ENCODE measurements at regions of chr9 and their contacts with region 1.

Region 1: GRCh38 chr9:128552153-128552743 is at the start of gene SPTAN1:
- DNase-seq: peak; percentile 99
- CTCF ChIP-seq: no peak

Region 2: DNA sequence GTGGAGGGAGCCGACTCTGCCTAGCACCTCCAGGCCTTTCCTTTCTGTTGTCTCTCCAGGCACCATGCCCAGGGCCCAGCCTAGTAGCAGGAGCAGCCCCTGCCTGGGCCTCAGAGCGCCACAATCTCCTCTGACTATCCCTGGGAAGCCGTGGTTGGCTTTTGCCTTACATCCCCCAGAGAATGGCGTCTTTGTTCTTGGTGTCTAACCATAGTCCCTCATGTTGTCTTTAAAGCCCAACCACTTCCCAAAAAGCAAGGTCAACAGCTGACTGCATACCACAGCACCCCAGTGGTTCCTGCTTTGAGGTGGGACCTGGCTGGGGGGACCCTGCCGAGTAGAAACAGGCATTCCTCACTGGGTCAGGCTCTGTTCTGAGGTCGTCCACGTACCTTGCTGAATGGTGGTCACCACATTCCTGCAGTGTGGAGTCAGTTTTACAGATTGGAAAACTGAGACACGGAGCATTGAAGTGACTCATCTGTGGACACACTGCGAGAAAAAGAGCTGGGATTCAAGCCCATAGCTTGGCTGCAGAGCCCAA is 145.3 kb before region 1 on chr9:
- CTCF ChIA-PET with region 1: no interaction called
- POLR2A ChIA-PET with region 1: no interaction called
- DNase-seq: no peak
- CTCF ChIP-seq: no peak

Region 3: DNA sequence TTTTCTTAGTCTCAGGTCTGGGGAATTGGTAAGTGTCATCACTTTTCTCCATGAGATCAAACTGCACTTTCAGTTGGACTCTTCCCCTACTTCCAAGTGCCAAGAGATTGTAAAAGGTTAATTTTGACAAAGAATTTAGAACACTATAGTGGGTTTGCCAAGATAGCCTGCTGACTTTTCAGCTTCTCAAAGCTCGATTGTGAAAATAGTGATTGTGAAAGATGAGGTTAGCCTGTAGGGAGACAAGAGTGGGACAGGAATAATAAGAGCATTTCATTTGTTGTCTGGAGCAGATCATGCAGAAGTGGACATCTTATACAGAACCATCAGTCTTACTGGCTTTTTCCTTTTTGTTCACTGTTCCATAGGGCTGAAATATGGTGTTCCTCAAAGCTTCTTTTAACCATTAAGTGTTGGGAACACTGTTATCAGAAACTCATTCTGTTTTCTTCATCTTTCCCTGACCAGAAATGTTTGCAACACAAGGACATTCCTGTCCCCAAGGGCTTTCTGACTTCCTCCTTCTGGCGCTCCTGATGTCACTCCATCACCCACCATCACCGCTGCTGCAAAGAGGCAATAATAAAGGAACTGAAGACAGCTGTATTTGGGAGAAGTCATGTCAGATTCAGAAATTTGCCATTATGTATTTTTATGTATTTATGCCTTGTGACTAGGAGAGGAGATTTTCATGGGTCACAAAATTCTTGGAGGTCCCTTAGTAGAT is 11.5 kb before region 1 on chr9:
- CTCF ChIA-PET with region 1: interaction called, 22 read pairs
- POLR2A ChIA-PET with region 1: interaction called, 14 read pairs
- DNase-seq: no peak
- CTCF ChIP-seq: no peak

Region 4: GRCh38 chr9:128595471-128595870 is 43.2 kb after region 1 on chr9:
- CTCF ChIA-PET with region 1: no interaction called
- POLR2A ChIA-PET with region 1: no interaction called
- DNase-seq: no peak
- CTCF ChIP-seq: no peak

Region 5: GRCh38 chr9:128684279-128685021 is 132.2 kb after region 1 on chr9:
- CTCF ChIA-PET with region 1: no interaction called
- POLR2A ChIA-PET with region 1: interaction called, 12 read pairs
- DNase-seq: peak; percentile 88
- CTCF ChIP-seq: no peak

Measured in GM10248 (cell line).